HEK293T (cell line): ENCODE measurements at regions of chr12 and their contacts with region 1.

Region 1: GRCh38 chr12:4276524-4277204 is 3.1 kb downstream of the CCND2 start:
- DNase-seq: peak; percentile 79

Region 2: GRCh38 chr12:3885277-3886094 is 391.2 kb before region 1 on chr12:
- CTCF ChIA-PET with region 1: interaction called, 14 read pairs
- POLR2A ChIA-PET with region 1: interaction called, 5 read pairs
- DNase-seq: peak; percentile 19

Region 3: DNA sequence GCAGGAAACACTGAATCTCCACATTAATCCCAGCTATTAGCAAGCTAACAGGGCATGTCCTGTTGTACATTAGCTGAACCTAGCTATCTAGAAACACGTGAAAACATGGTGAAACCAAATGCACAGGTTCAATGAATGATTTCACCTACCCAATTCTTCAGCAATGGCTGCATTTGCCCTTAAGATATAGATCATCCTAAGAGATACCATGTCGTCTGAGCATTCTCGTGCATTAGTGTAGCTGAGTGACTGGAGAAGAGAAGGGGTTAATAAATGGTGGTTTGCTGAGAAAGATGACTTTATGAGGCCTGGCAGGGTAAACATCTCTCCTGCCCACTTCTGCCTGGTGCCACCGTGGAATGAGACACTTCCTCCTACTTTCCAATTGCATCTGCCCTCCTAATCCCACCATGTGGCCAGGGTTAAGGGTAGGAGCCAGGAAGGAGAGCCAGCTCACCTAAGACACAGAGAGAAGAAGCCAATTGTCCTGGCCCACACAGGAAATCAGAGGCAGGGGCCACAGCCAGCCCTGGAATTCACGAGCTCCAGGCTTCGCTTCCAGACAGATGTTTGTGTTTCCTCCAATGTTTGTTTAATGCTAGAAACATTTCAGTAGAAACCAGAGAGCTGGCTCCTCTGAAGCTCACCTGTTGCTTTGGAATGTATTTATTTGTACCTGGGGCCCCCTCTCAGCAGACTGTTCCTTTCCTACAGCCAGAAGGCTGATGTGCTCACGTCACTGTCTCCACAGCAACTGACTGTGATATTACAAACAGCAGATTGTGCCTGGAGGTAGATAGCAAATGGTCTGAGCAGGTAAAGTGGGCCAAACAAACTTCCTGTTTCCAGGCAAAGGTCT is 277.5 kb before region 1 on chr12:
- CTCF ChIA-PET with region 1: interaction called, 10 read pairs
- POLR2A ChIA-PET with region 1: interaction called, 8 read pairs
- DNase-seq: no peak

Region 4: GRCh38 chr12:4030929-4031702 is 245.5 kb before region 1 on chr12:
- CTCF ChIA-PET with region 1: interaction called, 12 read pairs
- POLR2A ChIA-PET with region 1: interaction called, 7 read pairs
- DNase-seq: peak; percentile 94

Region 5: GRCh38 chr12:4037747-4038312 is 238.8 kb before region 1 on chr12:
- CTCF ChIA-PET with region 1: interaction called, 24 read pairs
- POLR2A ChIA-PET with region 1: interaction called, 11 read pairs
- DNase-seq: peak; percentile 38

Region 6: GRCh38 chr12:4346931-4347330 is 70.3 kb after region 1 on chr12:
- CTCF ChIA-PET with region 1: no interaction called
- POLR2A ChIA-PET with region 1: no interaction called
- DNase-seq: no peak